Activated naive CD8-positive, alpha-beta T cell treated with anti-CD3 and anti-CD28 coated beads, Interleukin-2, amount 10 ng/mL, durations not matched to agents 7 days and 5 days (primary cell): ENCODE measurements at regions of chr22 and their contacts with region 1.

Region 1: DNA sequence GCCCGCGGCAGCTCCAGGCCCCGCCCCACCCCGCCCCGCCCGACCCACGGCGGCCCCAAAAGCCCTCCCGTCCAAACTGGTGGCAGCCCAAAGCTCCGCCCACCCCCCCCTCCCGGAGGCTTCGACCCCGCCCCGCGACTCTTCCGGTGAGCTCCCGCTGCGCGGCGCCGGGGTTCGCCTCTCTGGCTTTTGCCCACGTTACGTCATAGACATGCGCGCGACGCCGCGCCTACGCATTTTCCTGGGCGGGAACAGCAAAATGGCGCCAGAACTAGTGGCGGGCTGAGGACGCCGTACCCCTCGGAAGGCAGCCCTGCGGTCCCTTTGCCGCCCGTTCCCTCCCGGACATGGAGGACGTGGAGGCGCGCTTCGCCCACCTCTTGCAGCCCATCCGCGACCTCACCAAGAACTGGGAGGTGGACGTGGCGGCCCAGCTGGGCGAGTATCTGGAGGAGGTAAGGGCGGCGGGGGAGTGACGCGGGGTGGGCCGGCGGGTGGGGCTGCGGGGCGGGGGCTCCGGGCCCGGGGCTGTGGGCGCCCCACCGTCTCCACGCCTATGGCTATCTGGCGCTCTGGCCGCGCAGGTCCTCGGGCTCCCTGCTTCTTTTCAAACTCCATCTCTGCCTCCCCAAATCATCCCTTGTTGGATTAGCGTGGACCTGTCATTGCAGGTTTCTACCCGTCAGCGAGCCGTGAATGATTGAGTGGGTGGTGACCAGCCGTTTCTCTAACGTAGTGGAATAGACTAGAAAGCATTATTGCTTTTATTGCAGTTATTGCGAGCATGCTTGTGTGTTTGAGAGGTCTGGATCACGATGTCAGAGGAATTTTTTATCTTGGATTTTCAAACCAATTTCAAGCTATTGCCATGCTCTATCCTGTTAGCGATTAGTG is at the start of gene NCAPH2:
- DNase-seq: peak; percentile 98
- ATAC-seq: peak; percentile 72
- H3K4me3 Mint-ChIP-seq: peak within 1 kb of the TSS; percentile 97
- H3K27ac Mint-ChIP-seq: peak within 1 kb of the TSS; percentile 92
- H3K4me1 Mint-ChIP-seq: peaks cover 14% of the 10 kb centered on the region
- H3K27me3 Mint-ChIP-seq: no peaks in the 10 kb centered on the region
- total RNA-seq, gene NCAPH2: 126 TPM

Region 2: DNA sequence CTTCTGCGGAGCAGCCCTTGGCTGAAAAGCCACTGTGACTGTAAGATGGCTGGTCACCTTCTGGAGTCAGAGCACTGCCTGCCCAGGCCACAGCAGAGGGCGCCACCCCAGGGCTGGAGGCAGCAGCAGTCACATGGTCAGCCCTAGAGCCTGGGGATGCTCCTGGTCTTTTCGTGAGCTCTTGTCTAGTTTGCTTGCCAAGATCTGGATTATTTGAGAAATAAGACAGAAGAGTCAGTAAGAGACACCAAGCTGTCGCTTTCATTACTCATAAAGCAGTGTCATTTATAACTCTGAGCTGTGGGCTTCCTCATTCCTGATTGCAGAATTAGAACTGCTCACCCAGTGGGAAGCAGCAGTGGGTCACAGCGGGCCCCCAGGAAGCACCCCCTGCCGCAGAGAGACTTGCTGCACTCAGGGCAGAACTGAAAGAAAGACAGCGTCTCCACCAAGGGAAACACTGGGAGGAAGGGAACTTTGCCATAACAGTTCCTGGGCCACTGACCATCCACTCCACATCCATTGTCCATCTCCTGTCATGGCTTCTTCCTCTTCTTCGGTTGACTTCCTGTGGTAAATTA is 108.4 kb before region 1 on chr22:
- POLR2A ChIA-PET with region 1: no interaction called
- DNase-seq: peak; percentile 46
- ATAC-seq: peak; percentile 60
- H3K4me3 Mint-ChIP-seq: peak overlapping the region; percentile 23
- H3K27ac Mint-ChIP-seq: peak overlapping the region; percentile 76
- H3K4me1 Mint-ChIP-seq: peaks cover 22% of the 10 kb centered on the region
- H3K27me3 Mint-ChIP-seq: no peaks in the 10 kb centered on the region

Region 3: GRCh38 chr22:50537765-50538164 is 29.5 kb after region 1 on chr22:
- POLR2A ChIA-PET with region 1: interaction called, 16 read pairs
- DNase-seq: no peak
- ATAC-seq: no peak
- H3K4me3 Mint-ChIP-seq: peak overlapping the region; percentile 52
- H3K27ac Mint-ChIP-seq: peak overlapping the region; percentile 100
- H3K4me1 Mint-ChIP-seq: peaks cover 62% of the 10 kb centered on the region
- H3K27me3 Mint-ChIP-seq: no peaks in the 10 kb centered on the region

Region 4: GRCh38 chr22:50582562-50583293 is 74.5 kb after region 1 on chr22 and contains the start of gene CHKB:
- POLR2A ChIA-PET with region 1: interaction called, 14 read pairs
- DNase-seq: peak; percentile 98
- ATAC-seq: peak; percentile 94
- H3K4me3 Mint-ChIP-seq: peak within 1 kb of the TSS; percentile 99
- H3K27ac Mint-ChIP-seq: peak within 1 kb of the TSS; percentile 96
- H3K4me1 Mint-ChIP-seq: peaks cover 19% of the 10 kb centered on the region
- H3K27me3 Mint-ChIP-seq: no peaks in the 10 kb centered on the region
- total RNA-seq, gene CHKB: 132 to 137 TPM